ENCODE measurements at regions of chr6 and their contacts with region 1.

Region 1: GRCh38 chr6:139588076-139588639 is 213.7 kb upstream of the CITED2 start:
- DNase-seq: peak; percentile 65
- ATAC-seq: peak; percentile 22
- H3K4me3 ChIP-seq: no peak overlapping the region
- H3K27ac ChIP-seq: peak overlapping the region; percentile 97
- H3K4me1 ChIP-seq: peaks cover 14% of the 10 kb centered on the region
- H3K27me3 ChIP-seq: no peaks in the 10 kb centered on the region
- CTCF ChIP-seq: no peak
- POLR2A ChIP-seq: no peak
- RAD21 ChIP-seq: no peak

Region 2: GRCh38 chr6:139753198-139753861 is 165.2 kb after region 1 on chr6:
- CTCF ChIA-PET with region 1: no interaction called
- POLR2A ChIA-PET with region 1: no interaction called
- dilution Hi-C with region 1: no loop called
- in situ Hi-C with region 1: no loop called
- intact Hi-C with region 1: loop called (anchors 5 kb)
- DNase-seq: peak; percentile 77
- ATAC-seq: peak; percentile 75
- H3K4me3 ChIP-seq: no peak overlapping the region
- H3K27ac ChIP-seq: 0 out of 2 replicates have a peak overlapping the region, but pooled peaks have one; percentile 29
- H3K4me1 ChIP-seq: peaks cover 12% of the 10 kb centered on the region
- H3K27me3 ChIP-seq: no peaks in the 10 kb centered on the region
- CTCF ChIP-seq: no peak
- POLR2A ChIP-seq: no peak
- RAD21 ChIP-seq: no peak

Region 3: DNA sequence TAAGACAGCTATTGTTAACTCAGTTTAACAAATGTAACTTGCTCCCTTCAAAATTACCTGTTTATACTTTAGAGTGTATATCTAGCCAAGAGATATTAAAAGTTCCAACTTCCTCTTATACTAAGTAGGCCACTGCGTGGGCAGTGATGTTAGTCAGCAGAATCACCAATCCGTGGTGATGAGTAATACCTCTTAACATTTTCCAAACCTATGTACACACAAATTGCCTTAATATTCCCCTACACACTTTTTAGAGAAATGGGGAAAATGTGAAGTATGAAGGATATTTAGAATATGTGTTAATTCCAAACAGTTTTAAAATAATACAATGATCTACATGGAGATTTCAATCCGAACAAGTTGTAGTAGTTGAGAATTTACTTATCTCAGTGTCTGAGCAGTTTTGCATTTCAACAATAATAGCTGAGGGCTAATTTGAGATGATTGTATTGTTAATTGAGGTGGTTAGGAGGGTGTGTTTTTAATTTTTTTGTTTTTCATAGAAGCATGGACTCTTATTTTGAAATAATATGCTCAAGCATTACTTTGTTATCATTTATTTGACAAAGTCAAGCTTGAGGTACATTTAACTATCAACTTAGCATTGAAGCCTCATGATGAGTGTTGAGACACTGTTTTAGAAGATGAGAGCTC is 898.1 kb after region 1 on chr6:
- CTCF ChIA-PET with region 1: no interaction called
- POLR2A ChIA-PET with region 1: no interaction called
- dilution Hi-C with region 1: no loop called
- in situ Hi-C with region 1: no loop called
- intact Hi-C with region 1: loop called (anchors 5 kb)
- DNase-seq: peak; percentile 95
- ATAC-seq: peak; percentile 92
- H3K4me3 ChIP-seq: no peak overlapping the region
- H3K27ac ChIP-seq: peak overlapping the region; percentile 59; the same call in 1 of the 2 replicates
- H3K4me1 ChIP-seq: peaks cover 9% of the 10 kb centered on the region
- H3K27me3 ChIP-seq: no peaks in the 10 kb centered on the region
- CTCF ChIP-seq: no peak
- POLR2A ChIP-seq: no peak
- RAD21 ChIP-seq: no peak